HEK293 (cell line): ENCODE measurements at regions of chr1 and their contacts with region 1.

Region 1: GRCh38 chr1:86774305-86775295 is 70.2 kb downstream of the SH3GLB1 start:
- H3K4me3 ChIP-seq: peak overlapping the region; percentile 12
- H3K27ac ChIP-seq: peak overlapping the region; percentile 81
- H3K4me1 ChIP-seq: peaks cover 35% of the 10 kb centered on the region
- CTCF ChIP-seq: no peak

Region 2: GRCh38 chr1:86704458-86704971 is 70.1 kb before region 1 on chr1 and contains the start of gene SH3GLB1:
- CTCF ChIA-PET with region 1: interaction called, 15 read pairs
- POLR2A ChIA-PET with region 1: interaction called, 15 read pairs
- H3K4me3 ChIP-seq: peak within 1 kb of the TSS; percentile 91
- H3K27ac ChIP-seq: peak within 1 kb of the TSS; percentile 98
- H3K4me1 ChIP-seq: peaks cover 4% of the 10 kb centered on the region; the same call in 1 of the 2 replicates
- CTCF ChIP-seq: peak; percentile 96

Region 3: DNA sequence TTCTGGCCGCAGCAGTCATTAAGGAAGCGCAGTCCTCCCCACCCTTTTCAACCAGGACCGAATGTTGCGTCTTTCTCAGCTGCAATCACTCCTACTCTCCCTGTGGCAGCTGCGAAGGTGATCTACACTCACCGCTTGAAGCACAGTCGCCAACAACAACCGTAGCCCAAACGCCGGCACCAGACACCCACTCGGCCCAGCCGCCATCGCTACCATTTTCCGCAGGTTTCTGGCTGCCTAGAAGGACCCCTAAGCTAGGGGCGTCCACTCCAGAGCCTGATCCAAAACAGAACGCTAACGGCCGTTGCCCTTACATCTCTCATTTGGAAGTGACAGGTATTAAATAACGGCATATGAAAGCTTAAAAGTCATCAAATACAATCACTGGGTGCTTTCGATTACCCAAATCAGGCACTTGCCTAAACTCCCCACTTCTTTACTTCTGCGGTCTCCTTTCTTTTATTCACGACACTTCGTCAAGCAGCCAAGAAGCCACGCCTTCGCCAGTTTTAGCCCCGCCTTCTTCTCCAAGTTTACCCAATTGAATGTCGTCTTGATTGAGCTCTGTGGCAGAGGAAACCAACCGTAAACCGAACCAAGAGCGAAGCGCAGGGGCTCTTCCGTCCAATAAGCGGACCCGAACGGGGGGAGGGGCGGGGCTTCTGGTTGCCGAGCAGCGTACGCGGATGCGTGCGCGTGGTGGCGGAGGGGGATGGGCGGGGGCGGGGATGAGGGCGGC is 139.5 kb after region 1 on chr1 and contains the start of gene SELENOF:
- CTCF ChIA-PET with region 1: no interaction called
- POLR2A ChIA-PET with region 1: interaction called, 12 read pairs
- H3K4me3 ChIP-seq: peak within 1 kb of the TSS; percentile 94
- H3K27ac ChIP-seq: peak within 1 kb of the TSS; percentile 76
- H3K4me1 ChIP-seq: no peaks in the 10 kb centered on the region; the same call in 1 of the 2 replicates
- CTCF ChIP-seq: no peak

Region 4: GRCh38 chr1:86965012-86965826 is 190.6 kb after region 1 on chr1:
- CTCF ChIA-PET with region 1: interaction called, 16 read pairs
- POLR2A ChIA-PET with region 1: no interaction called
- H3K4me3 ChIP-seq: no peak overlapping the region
- H3K27ac ChIP-seq: no peak overlapping the region
- H3K4me1 ChIP-seq: no peaks in the 10 kb centered on the region
- CTCF ChIP-seq: peak; percentile 60